ENCODE measurements at regions of chr4 and their contacts with region 1.

Region 1: GRCh38 chr4:10611673-10612072 is 72.9 kb downstream of the CLNK start:
- DNase-seq: peak; percentile 88
- ATAC-seq: peak; percentile 99
- H3K4me3 ChIP-seq: no peak overlapping the region
- H3K27ac ChIP-seq: peak overlapping the region; percentile 6; the same call in 1 of the 2 replicates
- H3K4me1 ChIP-seq: peaks cover 24% of the 10 kb centered on the region
- H3K27me3 ChIP-seq: no peaks in the 10 kb centered on the region
- CTCF ChIP-seq: no peak

Region 2: DNA sequence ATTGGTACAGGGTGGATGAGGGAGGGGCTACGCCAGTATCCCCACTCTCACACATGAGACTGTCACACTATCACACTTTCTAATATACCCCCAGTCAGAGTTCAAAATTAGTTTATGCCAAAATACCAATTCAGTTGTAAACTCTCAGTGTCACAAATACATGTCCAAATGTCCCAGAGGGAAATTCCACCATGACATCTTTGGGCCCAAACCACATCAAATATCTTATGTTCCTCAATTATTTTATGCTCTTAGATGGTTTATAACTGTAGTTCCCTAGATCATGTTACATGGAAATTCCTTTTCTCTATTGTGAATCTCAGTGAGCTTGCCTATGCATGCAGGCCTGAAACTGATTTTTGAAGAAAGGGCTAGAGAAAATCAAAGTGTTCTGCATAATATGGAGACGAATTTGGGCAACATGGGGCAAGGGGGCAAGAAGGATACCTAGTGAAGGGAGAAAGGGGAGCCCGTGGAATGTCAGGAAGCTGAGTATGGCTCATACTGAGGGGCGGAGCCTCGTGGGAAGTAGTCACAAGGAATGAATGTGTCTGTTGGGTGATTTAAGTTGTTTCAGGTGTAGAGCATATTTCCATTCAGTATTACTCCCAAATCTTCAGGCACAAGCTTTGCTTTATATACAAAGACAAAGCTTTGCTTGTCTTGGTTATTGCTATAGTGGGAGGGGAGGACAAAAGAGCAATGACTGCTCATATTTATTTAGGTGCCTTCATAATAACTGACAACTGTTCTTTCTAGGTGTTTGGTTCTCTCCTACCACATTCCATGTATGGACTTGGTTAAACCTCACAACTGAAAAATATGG is 32.1 kb after region 1 on chr4:
- CTCF ChIA-PET with region 1: no interaction called
- POLR2A ChIA-PET with region 1: interaction called, 10 read pairs
- intact Hi-C with region 1: no loop called
- DNase-seq: peak; percentile 11
- ATAC-seq: no peak
- H3K4me3 ChIP-seq: no peak overlapping the region
- H3K27ac ChIP-seq: no peak overlapping the region
- H3K4me1 ChIP-seq: no peaks in the 10 kb centered on the region
- H3K27me3 ChIP-seq: no peaks in the 10 kb centered on the region
- CTCF ChIP-seq: no peak

Region 3: DNA sequence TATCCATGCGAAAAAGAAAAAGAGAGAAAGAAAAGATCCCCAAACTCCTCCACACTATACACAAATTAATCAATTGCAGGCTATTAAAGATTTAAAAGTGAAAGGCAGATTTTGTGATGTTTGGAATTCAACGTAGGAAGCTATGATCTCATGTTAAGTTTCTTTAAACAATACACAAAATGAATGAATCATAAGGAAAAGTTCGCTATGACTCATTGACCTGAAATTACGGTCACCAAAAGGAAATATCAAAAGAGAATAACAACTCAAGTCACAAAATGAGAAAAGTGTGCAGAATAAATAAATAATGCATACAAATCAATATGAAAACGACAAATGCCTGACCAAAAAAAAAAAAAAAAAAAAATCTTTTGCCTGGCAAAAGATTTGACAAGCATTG is 44.3 kb after region 1 on chr4:
- CTCF ChIA-PET with region 1: no interaction called
- POLR2A ChIA-PET with region 1: no interaction called
- intact Hi-C with region 1: loop called (anchors 5 kb)
- DNase-seq: peak; percentile 71
- ATAC-seq: peak; percentile 64
- H3K4me3 ChIP-seq: peak overlapping the region; percentile 57
- H3K27ac ChIP-seq: peak overlapping the region; percentile 79
- H3K4me1 ChIP-seq: peaks cover 28% of the 10 kb centered on the region
- H3K27me3 ChIP-seq: no peaks in the 10 kb centered on the region
- CTCF ChIP-seq: no peak

Measured in PC-3 (cell line).